ENCODE measurements at regions of chr15 and their contacts with region 1.

Region 1: GRCh38 chr15:80404057-80404715 is at the start of gene ARNT2:
- DNase-seq: peak in 1 of 2 experiments; percentile 73
- H3K4me3 ChIP-seq: peak within 1 kb of the TSS; percentile 46 to 81 (median 68)
- H3K27ac ChIP-seq: peak within 1 kb of the TSS; percentile 75
- H3K4me1 ChIP-seq: peaks cover 0 to 12% (median 5%) of the 10 kb centered on the region in 4 experiments; a peak in 6 of 7 replicates
- H3K27me3 ChIP-seq: peaks cover 0 to 8% (median 3%) of the 10 kb centered on the region in 4 experiments; a peak in 4 of 7 replicates
- CTCF ChIP-seq: no peak
- EP300 ChIP-seq: no peak
- POLR2A ChIP-seq: peak in 1 of 2 experiments; percentile 33; a peak in 1 of 3 replicates
- RAD21 ChIP-seq: no peak
- total RNA-seq, gene ARNT2: 13.8 and 14.6 TPM in 2 replicates

Region 2: DNA sequence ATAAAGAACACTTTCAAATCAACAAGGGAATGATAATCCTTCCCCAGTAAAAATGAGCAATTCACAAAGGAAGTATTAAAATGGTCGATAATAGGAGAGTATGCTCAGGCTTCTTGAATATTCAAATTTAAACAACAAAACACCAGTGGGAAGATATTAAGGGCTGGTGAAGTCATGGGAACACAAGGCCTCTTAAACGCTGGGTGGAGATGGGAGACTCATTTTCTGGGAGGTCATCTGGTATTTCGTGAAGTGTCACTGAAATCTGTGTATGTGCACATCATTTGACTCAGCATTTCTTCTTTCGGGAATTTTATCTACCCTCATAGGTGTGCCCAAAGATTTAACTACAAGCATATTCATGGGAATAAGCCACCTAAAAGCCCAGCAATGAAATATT is 112.1 kb before region 1 on chr15:
- CTCF ChIA-PET with region 1: no interaction called
- POLR2A ChIA-PET with region 1: no interaction called
- DNase-seq: no peak
- H3K4me3 ChIP-seq: no peak overlapping the region
- H3K27ac ChIP-seq: no peak overlapping the region
- H3K4me1 ChIP-seq: peaks cover 0 to 3% (median 0%) of the 10 kb centered on the region in 4 experiments; a peak in 1 of 7 replicates
- H3K27me3 ChIP-seq: no peaks in the 10 kb centered on the region
- CTCF ChIP-seq: no peak
- EP300 ChIP-seq: no peak
- POLR2A ChIP-seq: no peak
- RAD21 ChIP-seq: no peak

Region 3: GRCh38 chr15:80418892-80419537 is 14.8 kb after region 1 on chr15:
- CTCF ChIA-PET with region 1: interaction called, 42 read pairs
- POLR2A ChIA-PET with region 1: interaction called, 5 read pairs
- DNase-seq: no peak
- H3K4me3 ChIP-seq: no peak overlapping the region
- H3K27ac ChIP-seq: no peak overlapping the region
- H3K4me1 ChIP-seq: no peaks in the 10 kb centered on the region; a peak in 1 of 7 replicates
- H3K27me3 ChIP-seq: no peaks in the 10 kb centered on the region
- CTCF ChIP-seq: peak; percentile 38 to 85 (median 65)
- EP300 ChIP-seq: no peak
- POLR2A ChIP-seq: no peak
- RAD21 ChIP-seq: peak; percentile 37 to 60; a peak in 3 of 4 replicates